Activated B cell treated with CpG ODN at 0.5 μM for 24 hours (primary cell): ENCODE measurements at regions of chr4 and their contacts with region 1.

Region 1: DNA sequence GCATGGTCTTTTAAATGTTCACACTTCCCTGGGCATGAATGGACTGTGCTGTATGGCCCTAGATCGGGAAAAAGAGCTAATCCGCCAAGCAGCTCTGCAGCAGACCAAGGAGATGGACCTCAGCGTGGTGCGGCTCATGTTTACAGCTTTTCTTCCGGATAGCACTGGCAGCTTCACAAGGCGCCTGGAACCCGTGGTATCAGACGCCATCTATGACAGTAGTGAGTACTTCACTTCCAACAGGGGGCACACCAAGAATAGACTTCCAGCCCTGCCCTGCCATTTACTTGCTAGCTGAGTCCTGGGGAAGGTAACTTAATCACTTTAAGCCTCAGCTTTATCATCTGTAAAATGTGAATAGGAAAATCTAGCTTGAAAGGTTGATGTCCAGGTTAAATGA is 77.7 kb downstream of the NFKB1 start:
- DNase-seq: no peak
- ATAC-seq: no peak
- H3K4me3 Mint-ChIP-seq: no peak overlapping the region
- H3K27ac Mint-ChIP-seq: peak overlapping the region; percentile 7
- H3K4me1 Mint-ChIP-seq: peaks cover 47% of the 10 kb centered on the region
- H3K27me3 Mint-ChIP-seq: no peaks in the 10 kb centered on the region
- CTCF ChIP-seq: no peak

Region 2: GRCh38 chr4:102598086-102598761 is 19.4 kb after region 1 on chr4:
- CTCF ChIA-PET with region 1: no interaction called
- POLR2A ChIA-PET with region 1: no interaction called
- intact Hi-C with region 1: loop called (anchors 2 kb)
- DNase-seq: no peak
- ATAC-seq: no peak
- H3K4me3 Mint-ChIP-seq: no peak overlapping the region
- H3K27ac Mint-ChIP-seq: peak overlapping the region; percentile 78
- H3K4me1 Mint-ChIP-seq: peaks cover 33% of the 10 kb centered on the region
- H3K27me3 Mint-ChIP-seq: no peaks in the 10 kb centered on the region
- CTCF ChIP-seq: no peak